Activated CD4-positive, alpha-beta memory T cell treated with anti-CD3 and anti-CD28 coated beads, Interleukin-2, amount 10 ng/mL, durations not matched to agents 7 days and 5 days (primary cell): ENCODE measurements at regions of chr5 and their contacts with region 1.

Region 1: GRCh38 chr5:91280362-91281269 is 102.5 kb downstream of the ARRDC3 start:
- DNase-seq: peak; percentile 90
- H3K4me3 Mint-ChIP-seq: peak overlapping the region; percentile 73
- H3K27ac Mint-ChIP-seq: peak overlapping the region; percentile 88
- H3K4me1 Mint-ChIP-seq: peaks cover 34% of the 10 kb centered on the region
- H3K27me3 Mint-ChIP-seq: peaks cover 3% of the 10 kb centered on the region

Region 2: GRCh38 chr5:91266184-91266705 is 14.4 kb before region 1 on chr5:
- CTCF ChIA-PET with region 1: interaction called, 7 read pairs
- POLR2A ChIA-PET with region 1: interaction called, 32 read pairs
- DNase-seq: no peak
- H3K4me3 Mint-ChIP-seq: no peak overlapping the region
- H3K27ac Mint-ChIP-seq: no peak overlapping the region
- H3K4me1 Mint-ChIP-seq: peaks cover 25% of the 10 kb centered on the region
- H3K27me3 Mint-ChIP-seq: no peaks in the 10 kb centered on the region

Region 3: GRCh38 chr5:91332267-91333045 is 51.8 kb after region 1 on chr5:
- CTCF ChIA-PET with region 1: no interaction called
- POLR2A ChIA-PET with region 1: interaction called, 11 read pairs
- DNase-seq: peak; percentile 50
- H3K4me3 Mint-ChIP-seq: no peak overlapping the region
- H3K27ac Mint-ChIP-seq: peak overlapping the region; percentile 61
- H3K4me1 Mint-ChIP-seq: peaks cover 36% of the 10 kb centered on the region
- H3K27me3 Mint-ChIP-seq: peaks cover 2% of the 10 kb centered on the region